ENCODE measurements at regions of chr7 and their contacts with region 1.

Region 1: DNA sequence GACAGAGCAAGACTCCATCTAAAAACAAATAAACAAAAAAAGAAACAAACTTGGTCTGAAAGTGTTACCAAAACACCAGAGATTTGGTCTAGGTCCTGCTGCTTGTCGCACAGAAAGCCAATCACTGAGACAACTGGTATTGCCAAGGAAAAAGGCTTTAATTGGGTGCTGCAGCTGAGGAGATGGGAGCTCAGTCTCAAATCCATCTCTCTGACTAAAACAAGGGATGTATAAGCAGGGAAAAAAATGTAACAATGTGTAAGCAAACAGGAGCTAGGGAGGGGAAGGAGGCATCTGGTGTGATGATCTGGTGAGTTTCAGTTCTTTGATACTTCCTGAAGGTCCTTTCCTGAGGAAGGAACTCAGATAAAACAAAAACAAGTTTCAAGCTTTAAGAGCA is 8.4 kb upstream of the PDIA4 start:
- DNase-seq: no peak
- H3K4me3 Mint-ChIP-seq: no peak overlapping the region
- H3K27ac Mint-ChIP-seq: no peak overlapping the region
- H3K4me1 Mint-ChIP-seq: no peaks in the 10 kb centered on the region
- H3K27me3 Mint-ChIP-seq: no peaks in the 10 kb centered on the region
- CTCF ChIP-seq: no peak

Region 2: GRCh38 chr7:149050941-149051340 is 14.3 kb after region 1 on chr7:
- CTCF ChIA-PET with region 1: interaction called, 10 read pairs
- intact Hi-C with region 1: no loop called
- DNase-seq: no peak
- H3K4me3 Mint-ChIP-seq: no peak overlapping the region
- H3K27ac Mint-ChIP-seq: no peak overlapping the region
- H3K4me1 Mint-ChIP-seq: no peaks in the 10 kb centered on the region
- H3K27me3 Mint-ChIP-seq: no peaks in the 10 kb centered on the region
- CTCF ChIP-seq: no peak

Region 3: GRCh38 chr7:149171892-149172533 is 135.3 kb after region 1 on chr7:
- CTCF ChIA-PET with region 1: no interaction called
- intact Hi-C with region 1: no loop called
- DNase-seq: no peak
- H3K4me3 Mint-ChIP-seq: no peak overlapping the region
- H3K27ac Mint-ChIP-seq: no peak overlapping the region
- H3K4me1 Mint-ChIP-seq: no peaks in the 10 kb centered on the region
- H3K27me3 Mint-ChIP-seq: no peaks in the 10 kb centered on the region
- CTCF ChIP-seq: no peak

Region 4: GRCh38 chr7:149474309-149475114 is 437.8 kb after region 1 on chr7:
- CTCF ChIA-PET with region 1: no interaction called
- intact Hi-C with region 1: no loop called
- DNase-seq: no peak
- H3K4me3 Mint-ChIP-seq: no peak overlapping the region
- H3K27ac Mint-ChIP-seq: no peak overlapping the region
- H3K4me1 Mint-ChIP-seq: peaks cover 7% of the 10 kb centered on the region
- H3K27me3 Mint-ChIP-seq: no peaks in the 10 kb centered on the region
- CTCF ChIP-seq: no peak

Measured in Calu3 (cell line).